WTC11 (cell line): ENCODE measurements at regions of chr1 and their contacts with region 1.

Region 1: DNA sequence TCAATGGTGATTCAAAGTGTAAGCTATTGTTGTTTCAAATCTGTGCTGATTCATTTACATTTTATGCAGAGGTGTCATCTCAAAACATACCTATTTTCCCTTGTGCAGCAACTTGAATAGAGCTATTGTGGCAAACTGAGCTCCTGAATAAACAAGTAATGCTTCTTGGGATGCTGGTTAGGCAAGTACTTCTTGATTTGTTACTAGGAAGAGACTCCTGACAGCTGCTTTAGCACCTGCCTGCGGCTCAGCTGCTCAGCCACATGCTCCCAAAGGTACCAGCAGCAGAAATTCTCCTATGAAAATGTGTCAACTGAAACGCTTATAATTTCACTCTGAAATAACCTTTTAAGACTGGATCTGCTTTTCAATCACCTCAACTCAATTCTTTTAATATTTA is 352.3 kb downstream of the RYR2 start:
- DNase-seq: no peak
- ATAC-seq: no peak
- H3K4me3 Mint-ChIP-seq: no peak overlapping the region
- H3K27ac Mint-ChIP-seq: peak overlapping the region; percentile 47; the same call in 1 of the 2 replicates
- H3K4me1 Mint-ChIP-seq: peaks cover 39% of the 10 kb centered on the region
- H3K27me3 Mint-ChIP-seq: no peaks in the 10 kb centered on the region
- CTCF ChIP-seq: no peak

Region 2: DNA sequence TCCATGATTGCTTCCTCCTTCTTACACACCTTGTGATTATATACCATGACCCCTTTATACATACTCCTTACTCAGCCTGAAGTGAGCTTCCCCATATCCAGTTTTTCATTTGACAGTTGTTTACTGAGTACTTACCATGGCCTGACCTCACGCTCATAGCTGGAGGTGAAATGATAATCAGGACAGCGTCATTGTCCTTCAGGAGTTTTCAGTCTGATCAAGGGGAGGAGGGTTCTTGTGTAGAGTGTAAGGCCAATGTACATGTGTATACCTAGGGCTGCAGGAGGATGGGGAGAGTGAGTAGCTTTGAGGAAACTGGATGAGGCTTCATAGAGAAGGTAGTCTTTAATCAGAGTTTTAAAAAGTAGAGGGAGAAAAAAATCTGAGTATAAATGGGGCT is 26.5 kb before region 1 on chr1:
- CTCF ChIA-PET with region 1: no interaction called
- POLR2A ChIA-PET with region 1: no interaction called
- DNase-seq: no peak
- ATAC-seq: no peak
- H3K4me3 Mint-ChIP-seq: no peak overlapping the region
- H3K27ac Mint-ChIP-seq: peak overlapping the region; percentile 2; the same call in 1 of the 2 replicates
- H3K4me1 Mint-ChIP-seq: peaks cover 7% of the 10 kb centered on the region; the same call in 1 of the 2 replicates
- H3K27me3 Mint-ChIP-seq: no peaks in the 10 kb centered on the region
- CTCF ChIP-seq: no peak

Region 3: DNA sequence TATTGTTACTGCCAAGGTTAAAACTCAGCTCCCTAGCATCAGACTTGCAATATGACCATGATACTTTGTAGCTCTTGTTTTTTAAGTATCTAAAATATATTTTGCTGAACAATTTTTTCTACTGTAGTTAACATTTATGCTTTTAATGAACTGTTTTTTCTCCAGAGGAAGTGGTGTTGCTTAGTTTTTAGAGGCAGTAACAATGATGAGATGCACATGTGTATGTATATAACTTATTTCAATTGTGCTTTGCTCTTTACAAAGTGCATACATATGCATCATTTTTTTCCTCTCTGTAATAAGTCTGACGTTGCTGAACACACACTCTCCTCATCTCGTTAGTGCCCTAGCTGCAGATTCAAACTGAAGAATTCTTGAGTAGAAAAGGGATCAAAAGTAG is 77.7 kb after region 1 on chr1:
- CTCF ChIA-PET with region 1: no interaction called
- POLR2A ChIA-PET with region 1: no interaction called
- DNase-seq: no peak
- ATAC-seq: no peak
- H3K4me3 Mint-ChIP-seq: no peak overlapping the region
- H3K27ac Mint-ChIP-seq: no peak overlapping the region
- H3K4me1 Mint-ChIP-seq: peaks cover 3% of the 10 kb centered on the region; the same call in 1 of the 2 replicates
- H3K27me3 Mint-ChIP-seq: no peaks in the 10 kb centered on the region
- CTCF ChIP-seq: no peak

Region 4: GRCh38 chr1:237562242-237562823 is 168.1 kb after region 1 on chr1:
- CTCF ChIA-PET with region 1: interaction called, 14 read pairs
- POLR2A ChIA-PET with region 1: no interaction called
- DNase-seq: no peak
- ATAC-seq: peak; percentile 97
- H3K4me3 Mint-ChIP-seq: no peak overlapping the region
- H3K27ac Mint-ChIP-seq: no peak overlapping the region
- H3K4me1 Mint-ChIP-seq: peaks cover 18% of the 10 kb centered on the region
- H3K27me3 Mint-ChIP-seq: no peaks in the 10 kb centered on the region
- CTCF ChIP-seq: 0 out of 2 replicates have a peak, but pooled peaks have one; percentile 22